CD4-positive, alpha-beta memory T cell (primary cell): ENCODE measurements at regions of chr17 and their contacts with region 1.

Region 1: DNA sequence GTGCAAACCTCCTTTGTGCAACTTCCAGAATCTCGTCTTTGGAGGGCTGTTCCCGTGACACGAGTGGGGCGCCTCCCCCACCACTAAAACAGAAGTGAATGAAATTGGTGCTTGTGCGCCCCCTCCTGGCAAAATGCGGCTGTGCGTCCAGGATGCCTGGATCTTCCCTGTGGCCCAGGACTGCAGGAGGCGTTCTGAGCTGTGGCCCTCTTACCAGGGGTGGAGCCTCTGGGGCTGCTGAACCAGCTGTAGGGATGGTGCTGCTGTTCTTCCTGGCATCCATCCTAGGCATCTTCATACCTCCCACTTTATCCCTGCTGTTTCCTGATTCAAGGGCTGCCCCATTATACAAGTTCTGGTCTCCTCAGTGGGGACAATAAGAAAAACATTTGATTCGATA is 18.5 kb upstream of the NAGLU start:
- DNase-seq: peak; percentile 73 to 79 (median 76)
- H3K4me3 ChIP-seq: no peak overlapping the region
- H3K4me3 Mint-ChIP-seq: no peak overlapping the region
- H3K27ac ChIP-seq: no peak overlapping the region
- H3K27ac Mint-ChIP-seq: peak overlapping the region in 1 of 7 donors; percentile 37
- H3K4me1 ChIP-seq: peaks cover 7% of the 10 kb centered on the region
- H3K4me1 Mint-ChIP-seq: peaks cover 0 to 8% (median 3%) of the 10 kb centered on the region in 4 donors
- H3K27me3 ChIP-seq: no peaks in the 10 kb centered on the region
- H3K27me3 Mint-ChIP-seq: no peaks in the 10 kb centered on the region

Region 2: DNA sequence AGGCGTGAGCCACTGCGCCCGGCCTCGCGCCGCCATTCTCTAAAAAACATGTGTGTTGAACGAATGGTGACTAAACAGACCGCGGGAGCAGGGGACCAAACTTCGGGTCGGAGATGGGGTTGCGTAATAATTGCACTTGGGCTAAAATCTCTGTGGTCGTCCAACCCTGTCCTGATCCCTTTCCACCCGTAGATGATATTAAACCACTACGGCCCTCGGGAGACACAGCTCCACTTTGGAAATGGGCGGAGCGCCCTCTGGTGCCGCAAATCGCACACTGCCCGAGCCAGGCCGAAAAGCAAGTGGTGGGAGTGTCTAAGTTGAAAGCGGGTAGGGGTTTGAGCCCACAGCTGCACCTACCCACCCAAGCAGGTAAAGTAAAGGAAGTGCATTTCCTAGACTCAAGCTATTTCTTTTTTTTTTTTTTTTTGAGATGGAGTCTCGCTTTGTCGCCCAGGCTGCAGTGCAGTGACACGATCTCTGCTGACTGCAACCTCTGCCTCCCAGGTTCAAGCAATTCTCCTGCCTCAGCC is 111.5 kb before region 1 on chr17:
- CTCF ChIA-PET with region 1: interaction called, 12 read pairs
- POLR2A ChIA-PET with region 1: no interaction called
- intact Hi-C with region 1: loop called (anchors 1 kb)
- DNase-seq: peak; percentile 76 to 81 (median 79)
- H3K4me3 ChIP-seq: no peak overlapping the region
- H3K4me3 Mint-ChIP-seq: no peak overlapping the region
- H3K27ac ChIP-seq: no peak overlapping the region
- H3K27ac Mint-ChIP-seq: peak overlapping the region in 6 of 7 donors; percentile 19 to 68 (median 38)
- H3K4me1 ChIP-seq: peaks cover 4% of the 10 kb centered on the region
- H3K4me1 Mint-ChIP-seq: peaks cover 8 to 17% (median 10%) of the 10 kb centered on the region in 4 donors
- H3K27me3 ChIP-seq: no peaks in the 10 kb centered on the region
- H3K27me3 Mint-ChIP-seq: no peaks in the 10 kb centered on the region

Region 3: DNA sequence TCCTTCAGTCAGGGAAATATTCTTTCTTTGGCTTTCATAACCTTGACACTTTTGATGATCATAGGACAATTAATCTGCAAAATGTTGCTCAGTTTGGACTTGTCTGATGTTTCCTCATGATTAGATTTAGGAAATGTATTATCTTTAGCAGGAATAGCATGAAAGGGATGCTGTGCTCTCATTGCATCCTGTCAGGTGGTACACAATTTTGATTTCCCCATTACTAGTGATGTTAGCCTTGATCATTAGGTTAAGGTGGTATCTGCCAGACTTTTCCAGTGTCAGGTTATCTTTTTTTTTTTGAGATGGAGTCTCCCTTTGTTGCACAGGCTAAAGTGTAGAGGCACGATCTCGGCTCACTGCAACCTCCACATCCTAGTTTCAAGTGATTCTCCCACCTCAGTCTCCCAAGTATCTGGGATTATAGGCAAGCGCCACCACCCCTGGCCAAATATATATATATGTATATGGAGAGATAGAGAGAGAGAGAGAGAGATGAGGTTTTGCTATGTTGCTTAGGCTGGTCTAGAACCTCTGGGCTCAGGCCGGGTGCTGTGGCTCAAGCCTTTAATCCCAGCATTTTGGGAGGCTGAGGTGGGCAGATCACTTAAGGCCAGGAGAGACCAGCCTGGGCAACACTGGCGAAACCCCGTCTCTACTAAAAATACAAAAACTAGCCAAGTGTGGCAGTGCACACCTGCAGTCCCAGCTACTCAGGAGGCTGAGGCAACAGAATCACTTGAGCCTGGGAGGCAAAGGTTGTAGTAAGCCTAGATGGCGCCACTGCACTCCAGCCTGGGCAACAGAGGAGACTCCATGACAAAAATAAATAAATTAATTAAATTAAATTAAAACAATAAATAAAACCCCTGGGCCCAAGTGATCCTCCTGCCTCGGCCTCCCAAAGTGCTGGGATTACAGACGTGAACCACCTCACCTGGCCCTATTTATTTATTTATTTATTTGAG is 78.6 kb before region 1 on chr17:
- CTCF ChIA-PET with region 1: interaction called, 86 read pairs
- POLR2A ChIA-PET with region 1: no interaction called
- intact Hi-C with region 1: loop called (anchors 1 kb)
- DNase-seq: peak in 2 of 5 donors; percentile 34 to 38
- H3K4me3 ChIP-seq: no peak overlapping the region
- H3K4me3 Mint-ChIP-seq: no peak overlapping the region
- H3K27ac ChIP-seq: no peak overlapping the region
- H3K27ac Mint-ChIP-seq: no peak overlapping the region
- H3K4me1 ChIP-seq: peaks cover 9% of the 10 kb centered on the region
- H3K4me1 Mint-ChIP-seq: peaks cover 5 to 15% (median 10%) of the 10 kb centered on the region in 4 donors
- H3K27me3 ChIP-seq: no peaks in the 10 kb centered on the region
- H3K27me3 Mint-ChIP-seq: peaks cover 3 to 5% of the 10 kb centered on the region in 2 donors

Region 4: GRCh38 chr17:42493319-42493718 is 24.2 kb before region 1 on chr17:
- CTCF ChIA-PET with region 1: interaction called, 11 read pairs
- POLR2A ChIA-PET with region 1: no interaction called
- intact Hi-C with region 1: no loop called
- DNase-seq: no peak
- H3K4me3 ChIP-seq: no peak overlapping the region
- H3K4me3 Mint-ChIP-seq: no peak overlapping the region
- H3K27ac ChIP-seq: no peak overlapping the region
- H3K27ac Mint-ChIP-seq: no peak overlapping the region
- H3K4me1 ChIP-seq: peaks cover 4% of the 10 kb centered on the region
- H3K4me1 Mint-ChIP-seq: peaks cover 4 to 15% (median 11%) of the 10 kb centered on the region in 4 donors
- H3K27me3 ChIP-seq: no peaks in the 10 kb centered on the region
- H3K27me3 Mint-ChIP-seq: no peaks in the 10 kb centered on the region

Region 5: DNA sequence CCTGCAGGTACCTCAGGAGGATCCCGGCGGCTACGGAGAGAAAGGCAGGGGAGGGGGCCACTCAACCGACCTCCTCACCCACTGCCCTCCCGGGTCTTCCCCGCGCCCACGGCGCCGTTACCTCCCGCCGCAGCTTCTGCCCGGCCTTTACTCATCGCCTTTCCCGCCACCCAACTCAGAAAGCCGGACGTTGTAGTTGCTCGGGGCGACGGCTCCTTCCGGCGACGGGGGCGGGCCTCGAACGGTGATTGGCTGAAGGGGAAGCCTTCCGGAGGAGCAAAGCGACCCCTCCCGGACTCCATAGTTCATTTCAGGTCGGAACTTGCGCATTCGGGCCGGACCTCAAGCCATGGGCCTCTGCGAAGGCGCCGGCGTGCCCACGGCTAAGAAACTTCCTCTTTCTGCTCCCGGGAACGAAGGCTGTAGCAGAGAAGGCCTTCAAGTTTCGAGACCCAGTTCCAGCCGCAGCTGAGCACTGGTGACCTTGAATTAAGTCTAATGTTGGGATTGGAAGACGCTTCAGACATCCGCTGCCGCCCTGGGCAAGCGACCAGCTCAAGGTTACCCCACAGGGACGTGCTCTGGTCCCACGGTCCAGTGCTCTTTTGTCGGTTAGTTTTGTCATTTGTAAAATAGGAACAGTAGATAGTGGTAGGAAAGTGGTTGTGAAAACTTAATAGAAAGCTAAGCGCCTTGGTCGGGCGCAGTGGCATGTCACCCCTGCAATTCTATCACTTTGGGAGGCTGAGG is 60.2 kb after region 1 on chr17 and contains the start of gene PSMC3IP:
- CTCF ChIA-PET with region 1: no interaction called
- POLR2A ChIA-PET with region 1: no interaction called
- intact Hi-C with region 1: no loop called
- DNase-seq: peak; percentile 83 to 93 (median 88)
- H3K4me3 ChIP-seq: peak within 1 kb of the TSS; percentile 83 to 100
- H3K4me3 Mint-ChIP-seq: peak within 1 kb of the TSS; percentile 96 to 99 (median 99)
- H3K27ac ChIP-seq: peak within 1 kb of the TSS; percentile 84
- H3K27ac Mint-ChIP-seq: peak within 1 kb of the TSS; percentile 87 to 99 (median 97)
- H3K4me1 ChIP-seq: peaks cover 17% of the 10 kb centered on the region
- H3K4me1 Mint-ChIP-seq: peaks cover 18 to 44% (median 23%) of the 10 kb centered on the region in 4 donors
- H3K27me3 ChIP-seq: no peaks in the 10 kb centered on the region
- H3K27me3 Mint-ChIP-seq: no peaks in the 10 kb centered on the region
- total RNA-seq, gene PSMC3IP: 3.4 to 4.5 TPM